ENCODE measurements at regions of chr4 and their contacts with region 1.

Region 1: DNA sequence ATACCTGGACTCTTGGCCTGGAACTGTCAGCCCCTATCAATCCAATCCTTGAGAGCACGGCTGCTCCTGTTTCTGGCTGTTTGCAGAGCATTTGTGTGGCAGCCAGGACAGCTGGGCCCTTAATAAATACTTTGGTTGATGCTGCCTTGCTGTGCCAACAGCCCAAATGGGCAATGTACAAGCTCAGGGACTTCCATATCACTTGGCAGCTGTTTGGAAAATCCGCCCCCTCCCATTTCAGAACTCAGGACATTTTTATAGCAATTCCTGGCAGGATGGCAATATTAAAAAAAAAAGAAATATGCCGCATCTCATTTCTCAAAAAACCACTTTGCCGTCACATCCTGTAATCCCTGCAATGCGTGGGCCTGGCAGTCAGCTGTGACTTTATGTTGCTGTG is 218.9 kb downstream of the HS3ST1 start:
- DNase-seq: no peak
- H3K4me3 ChIP-seq: no peak overlapping the region
- H3K27ac ChIP-seq: no peak overlapping the region
- H3K4me1 ChIP-seq: no peaks in the 10 kb centered on the region
- H3K27me3 ChIP-seq: no peaks in the 10 kb centered on the region
- CTCF ChIP-seq: no peak

Region 2: GRCh38 chr4:11196927-11197522 is 12.8 kb before region 1 on chr4:
- CTCF ChIA-PET with region 1: interaction called, 10 read pairs
- POLR2A ChIA-PET with region 1: no interaction called
- intact Hi-C with region 1: no loop called
- DNase-seq: no peak
- H3K4me3 ChIP-seq: no peak overlapping the region
- H3K27ac ChIP-seq: no peak overlapping the region
- H3K4me1 ChIP-seq: no peaks in the 10 kb centered on the region
- H3K27me3 ChIP-seq: no peaks in the 10 kb centered on the region
- CTCF ChIP-seq: no peak